Psoas muscle (tissue), 8 donors: ENCODE measurements at regions of chr16 and their contacts with region 1.

Region 1: GRCh38 chr16:75919664-75920063 is 193.4 kb upstream of the CPHXL start:
- DNase-seq: no peak
- ATAC-seq: no peak
- H3K4me3 ChIP-seq: no peak overlapping the region
- H3K27ac ChIP-seq: no peak overlapping the region
- H3K4me1 ChIP-seq: no peaks in the 10 kb centered on the region
- H3K27me3 ChIP-seq: no peaks in the 10 kb centered on the region
- CTCF ChIP-seq: no peak

Region 2: DNA sequence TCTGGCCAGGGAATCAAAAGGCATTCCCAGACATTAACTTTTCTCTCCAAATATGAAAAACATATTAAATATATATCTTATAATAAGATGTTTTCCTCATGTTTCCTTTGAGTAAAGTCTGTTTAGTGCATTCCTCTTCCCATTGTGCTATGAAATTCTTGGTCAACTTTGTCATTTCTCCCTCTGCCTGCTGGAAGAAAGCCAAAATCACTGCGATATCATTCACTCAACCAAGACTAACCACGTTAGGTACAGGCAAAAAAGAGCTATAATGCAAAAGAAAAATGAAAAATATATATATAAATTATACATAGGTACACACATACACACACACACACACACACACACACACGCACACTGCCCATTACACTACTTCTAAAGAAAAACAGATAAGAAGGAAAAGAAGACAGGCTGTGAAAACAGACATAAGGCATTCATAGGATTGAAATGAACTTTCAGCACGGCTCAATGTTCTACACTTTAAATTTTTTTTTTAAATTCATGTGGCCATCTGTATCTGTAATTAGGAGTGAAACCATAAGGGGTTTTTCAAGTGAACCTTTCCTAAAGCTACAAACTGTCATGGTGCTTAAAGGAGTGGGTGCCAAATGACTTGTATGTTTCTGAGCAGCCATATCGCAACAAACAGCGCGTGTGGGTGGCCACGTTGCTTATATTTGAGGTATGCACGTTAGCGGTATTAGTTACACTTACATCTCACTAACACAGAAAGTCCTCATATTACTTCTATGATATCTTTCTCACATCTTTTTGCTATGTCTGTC is 1694.6 kb before region 1 on chr16:
- intact Hi-C with region 1: loop called in 1 of 2 experiments (anchors 5 kb)
- DNase-seq: no peak
- ATAC-seq: no peak
- H3K4me3 ChIP-seq: no peak overlapping the region
- H3K27ac ChIP-seq: no peak overlapping the region
- H3K4me1 ChIP-seq: no peaks in the 10 kb centered on the region
- H3K27me3 ChIP-seq: no peaks in the 10 kb centered on the region
- CTCF ChIP-seq: no peak